GM18951 (cell line): ENCODE measurements at regions of chr20 and their contacts with region 1.

Region 1: DNA sequence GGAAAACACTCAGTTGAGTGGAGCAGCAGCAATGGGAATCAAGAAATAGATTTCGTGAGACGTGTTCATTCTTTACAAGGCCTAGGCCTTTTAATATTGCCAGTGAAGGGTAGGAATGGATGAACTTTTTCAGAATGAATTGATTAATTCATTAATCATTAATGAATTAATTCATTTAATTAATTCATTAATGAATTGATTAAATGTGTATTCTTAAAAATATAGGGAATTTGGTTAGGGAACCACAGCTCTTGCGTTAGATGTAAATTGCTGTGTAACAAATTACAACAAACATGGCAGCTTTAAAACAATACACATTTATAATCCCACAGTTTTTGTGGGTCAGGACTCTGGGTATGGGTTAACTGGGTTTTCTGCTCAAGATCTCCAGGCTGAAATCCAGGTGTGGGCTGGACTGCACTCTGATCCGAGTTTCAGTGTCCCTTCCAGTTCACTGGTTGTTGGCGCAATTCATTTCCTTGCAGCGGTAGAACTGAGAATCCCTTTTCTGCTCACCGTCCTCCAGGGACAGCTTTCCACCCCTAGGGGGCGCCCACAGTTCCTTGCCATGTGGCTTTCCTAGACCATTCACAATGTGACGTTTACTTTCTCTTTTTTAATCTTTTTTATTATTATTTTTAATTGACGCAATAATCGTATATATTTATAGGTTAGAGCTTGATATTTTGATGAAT is 32.8 kb upstream of the BCAS1 start:
- POLR2A ChIP-seq: no peak

Region 2: DNA sequence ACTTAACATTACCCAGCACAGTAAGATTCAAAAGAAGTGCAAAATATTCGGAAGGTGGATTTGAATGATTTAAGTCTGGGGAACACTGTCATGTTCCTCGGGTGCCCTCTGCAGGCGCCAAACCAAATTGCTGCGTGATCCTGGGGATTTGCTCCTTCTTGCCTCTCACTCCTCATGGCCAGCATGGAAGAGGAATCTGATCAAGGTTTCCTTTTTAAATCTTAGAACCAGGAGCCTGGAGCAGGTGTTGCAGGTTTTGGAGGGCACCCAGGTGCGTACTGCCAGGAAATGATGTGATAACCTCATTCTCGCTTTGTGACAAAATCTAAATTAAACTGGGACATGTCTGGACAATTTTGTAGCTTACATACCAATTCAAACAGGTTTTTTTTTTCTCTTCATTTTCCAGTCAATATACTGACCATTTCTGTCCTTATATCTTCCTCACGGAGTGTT is 96.5 kb after region 1 on chr20:
- in situ Hi-C with region 1: loop called (anchors 10 kb)
- POLR2A ChIP-seq: no peak

Region 3: GRCh38 chr20:54219751-54220426 is 116.7 kb after region 1 on chr20:
- in situ Hi-C with region 1: no loop called
- POLR2A ChIP-seq: no peak

Region 4: DNA sequence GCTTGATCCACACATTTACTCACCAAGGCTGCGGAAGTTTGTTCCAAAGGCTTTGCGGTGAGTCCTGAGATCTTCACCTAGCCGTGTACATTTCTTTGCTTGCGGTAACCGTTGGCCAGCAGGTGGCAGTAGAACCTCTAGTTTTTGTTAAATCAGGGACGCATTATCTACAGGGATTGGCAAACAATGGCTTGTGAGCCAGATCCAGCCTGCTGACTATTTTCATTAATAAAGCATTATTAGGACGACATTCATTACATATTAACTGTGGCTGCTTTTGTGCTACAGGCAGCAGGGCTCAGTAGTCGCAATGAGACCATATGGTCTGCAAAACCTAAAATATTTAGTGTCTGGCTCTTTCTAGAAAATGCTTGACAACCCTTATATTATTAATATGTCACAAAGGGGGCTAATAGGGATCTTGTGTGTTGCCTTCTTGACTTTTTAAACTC is 546.3 kb after region 1 on chr20:
- in situ Hi-C with region 1: loop called (anchors 10 kb)
- POLR2A ChIP-seq: no peak